Head of caudate nucleus (tissue), 42 donors: ENCODE measurements at regions of chr12 and their contacts with region 1.

Region 1: GRCh38 chr12:108731105-108731865 is at the start of gene CORO1C:
- DNase-seq: peak; percentile 80 to 97 (median 93)

Region 2: GRCh38 chr12:108691175-108691997 is 39.9 kb before region 1 on chr12:
- intact Hi-C with region 1: loop called (anchors 2 kb)
- DNase-seq: peak; percentile 83 to 98 (median 93)